ENCODE measurements at regions of chr6 and their contacts with region 1.

Region 1: GRCh38 chr6:11064836-11065235 is 20.7 kb upstream of the ELOVL2 start:
- DNase-seq: no peak
- ATAC-seq: no peak
- H3K4me3 ChIP-seq: no peak overlapping the region
- H3K4me3 Mint-ChIP-seq: no peak overlapping the region
- H3K27ac ChIP-seq: no peak overlapping the region
- H3K27ac Mint-ChIP-seq: no peak overlapping the region
- H3K4me1 ChIP-seq: no peaks in the 10 kb centered on the region
- H3K4me1 Mint-ChIP-seq: no peaks in the 10 kb centered on the region
- H3K27me3 ChIP-seq: no peaks in the 10 kb centered on the region
- H3K27me3 Mint-ChIP-seq: peaks cover 0 to 19% (median 7%) of the 10 kb centered on the region in 5 donors

Region 2: GRCh38 chr6:10478187-10479040 is 586.4 kb before region 1 on chr6:
- CTCF ChIA-PET with region 1: interaction called, 5 read pairs
- POLR2A ChIA-PET with region 1: no interaction called
- intact Hi-C with region 1: loop called in 1 of 2 experiments (anchors 1 kb)
- DNase-seq: peak in 3 of 9 donors; percentile 4 to 31 (median 15)
- ATAC-seq: no peak
- H3K4me3 ChIP-seq: no peak overlapping the region
- H3K4me3 Mint-ChIP-seq: no peak overlapping the region
- H3K27ac ChIP-seq: no peak overlapping the region
- H3K27ac Mint-ChIP-seq: no peak overlapping the region
- H3K4me1 ChIP-seq: no peaks in the 10 kb centered on the region
- H3K4me1 Mint-ChIP-seq: peaks cover 0 to 3% (median 0%) of the 10 kb centered on the region in 7 donors
- H3K27me3 ChIP-seq: no peaks in the 10 kb centered on the region
- H3K27me3 Mint-ChIP-seq: peaks cover 0 to 36% (median 22%) of the 10 kb centered on the region in 5 donors

Region 3: DNA sequence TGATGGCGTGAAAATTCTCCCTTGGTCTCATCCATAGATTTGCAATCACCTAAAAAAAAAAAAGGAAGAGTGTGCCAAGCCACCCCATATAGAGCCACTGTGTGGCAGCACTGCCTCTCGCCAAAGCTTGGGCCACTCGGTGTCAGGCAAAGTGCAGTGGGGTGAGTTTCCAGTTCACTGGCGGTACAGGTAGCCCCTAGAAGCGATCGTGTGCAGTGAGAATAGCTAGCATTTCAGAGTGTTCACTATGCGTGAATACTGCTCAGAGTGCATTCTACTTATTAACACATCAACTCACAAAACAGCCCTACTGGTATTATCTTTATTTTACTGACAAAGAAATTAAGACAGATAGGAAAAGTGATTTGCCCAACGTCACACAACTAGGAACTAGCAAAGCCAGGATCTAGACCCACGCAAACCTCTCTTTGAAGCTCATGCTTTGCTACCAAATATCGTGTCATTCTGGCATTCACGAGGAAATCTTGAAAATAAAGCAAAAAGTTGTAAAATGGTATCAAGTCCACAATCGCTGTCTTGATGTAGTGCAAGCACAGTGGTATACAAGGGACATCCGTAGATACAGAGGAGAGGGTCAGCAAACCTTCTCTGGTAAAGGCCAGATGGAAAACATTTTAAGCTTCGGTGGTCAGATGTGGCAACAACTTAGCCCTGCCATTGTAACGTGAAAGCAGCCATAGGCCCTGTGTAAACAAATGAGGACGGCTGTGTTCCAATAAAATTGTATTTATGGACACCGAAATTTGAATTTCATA is 554.1 kb before region 1 on chr6:
- CTCF ChIA-PET with region 1: no interaction called
- POLR2A ChIA-PET with region 1: no interaction called
- intact Hi-C with region 1: loop called in 1 of 2 experiments (anchors 1 kb)
- DNase-seq: peak in 8 of 9 donors; percentile 9 to 53 (median 39)
- ATAC-seq: peak; percentile 94
- H3K4me3 ChIP-seq: no peak overlapping the region
- H3K4me3 Mint-ChIP-seq: peak overlapping the region in 5 of 10 donors; percentile 8 to 40 (median 12)
- H3K27ac ChIP-seq: no peak overlapping the region
- H3K27ac Mint-ChIP-seq: peak overlapping the region in 1 of 9 donors; percentile 28
- H3K4me1 ChIP-seq: no peaks in the 10 kb centered on the region
- H3K4me1 Mint-ChIP-seq: peaks cover 0 to 7% (median 5%) of the 10 kb centered on the region in 7 donors
- H3K27me3 ChIP-seq: no peaks in the 10 kb centered on the region
- H3K27me3 Mint-ChIP-seq: peaks cover 0 to 11% (median 7%) of the 10 kb centered on the region in 5 donors

Region 4: DNA sequence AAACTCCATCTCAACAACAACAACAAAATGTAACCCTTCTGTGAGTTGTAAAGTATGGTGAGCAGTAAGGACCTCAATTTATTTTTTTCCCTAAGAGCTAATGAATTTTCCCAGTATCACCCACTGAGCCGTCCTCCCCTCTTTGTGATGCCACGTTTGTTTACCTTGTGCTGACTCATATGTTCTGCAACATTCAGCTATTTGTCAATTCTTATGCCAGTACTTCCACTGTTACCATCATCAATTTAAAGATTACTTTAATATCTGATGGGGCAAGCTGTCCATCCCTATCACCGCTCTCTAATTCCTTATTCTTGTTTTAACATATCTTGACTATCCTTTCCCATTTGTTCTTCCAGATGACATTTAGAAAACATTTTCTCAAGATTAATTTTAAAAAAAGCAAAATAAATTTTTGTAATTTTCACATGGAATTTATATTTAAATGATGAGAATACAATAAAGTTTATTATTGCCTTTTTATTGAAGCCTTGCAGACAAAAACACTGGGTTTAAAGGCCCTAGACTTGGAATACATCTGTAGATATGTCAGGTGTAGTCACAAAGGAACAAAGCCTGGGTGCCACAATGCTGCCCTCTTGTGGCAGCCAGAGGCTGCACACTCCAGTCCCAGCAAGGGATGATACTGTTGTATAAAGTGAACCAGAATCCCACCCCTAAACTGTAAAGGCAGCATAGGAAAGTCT is 263.9 kb before region 1 on chr6:
- CTCF ChIA-PET with region 1: no interaction called
- POLR2A ChIA-PET with region 1: no interaction called
- intact Hi-C with region 1: loop called in 1 of 2 experiments (anchors 5 kb)
- DNase-seq: peak; percentile 21 to 68 (median 56)
- ATAC-seq: peak; percentile 91
- H3K4me3 ChIP-seq: no peak overlapping the region
- H3K4me3 Mint-ChIP-seq: no peak overlapping the region
- H3K27ac ChIP-seq: no peak overlapping the region
- H3K27ac Mint-ChIP-seq: no peak overlapping the region
- H3K4me1 ChIP-seq: no peaks in the 10 kb centered on the region
- H3K4me1 Mint-ChIP-seq: peaks cover 0 to 2% (median 0%) of the 10 kb centered on the region in 7 donors
- H3K27me3 ChIP-seq: no peaks in the 10 kb centered on the region
- H3K27me3 Mint-ChIP-seq: no peaks in the 10 kb centered on the region

Region 5: GRCh38 chr6:10847684-10848083 is 217.2 kb before region 1 on chr6:
- CTCF ChIA-PET with region 1: no interaction called
- POLR2A ChIA-PET with region 1: no interaction called
- intact Hi-C with region 1: loop called in 1 of 2 experiments (anchors 5 kb)
- DNase-seq: no peak
- ATAC-seq: no peak
- H3K4me3 ChIP-seq: no peak overlapping the region
- H3K4me3 Mint-ChIP-seq: no peak overlapping the region
- H3K27ac ChIP-seq: no peak overlapping the region
- H3K27ac Mint-ChIP-seq: no peak overlapping the region
- H3K4me1 ChIP-seq: no peaks in the 10 kb centered on the region
- H3K4me1 Mint-ChIP-seq: no peaks in the 10 kb centered on the region
- H3K27me3 ChIP-seq: no peaks in the 10 kb centered on the region
- H3K27me3 Mint-ChIP-seq: peaks cover 6 to 32% (median 13%) of the 10 kb centered on the region in 5 donors

Region 6: GRCh38 chr6:10873313-10873712 is 191.5 kb before region 1 on chr6:
- CTCF ChIA-PET with region 1: no interaction called
- POLR2A ChIA-PET with region 1: no interaction called
- intact Hi-C with region 1: no loop called
- DNase-seq: no peak
- ATAC-seq: no peak
- H3K4me3 ChIP-seq: no peak overlapping the region
- H3K4me3 Mint-ChIP-seq: no peak overlapping the region
- H3K27ac ChIP-seq: no peak overlapping the region
- H3K27ac Mint-ChIP-seq: no peak overlapping the region
- H3K4me1 ChIP-seq: no peaks in the 10 kb centered on the region
- H3K4me1 Mint-ChIP-seq: no peaks in the 10 kb centered on the region
- H3K27me3 ChIP-seq: no peaks in the 10 kb centered on the region
- H3K27me3 Mint-ChIP-seq: peaks cover 0 to 27% (median 11%) of the 10 kb centered on the region in 5 donors

Region 7: GRCh38 chr6:10954590-10955010 is 110.2 kb before region 1 on chr6:
- CTCF ChIA-PET with region 1: no interaction called
- POLR2A ChIA-PET with region 1: no interaction called
- intact Hi-C with region 1: loop called in 1 of 2 experiments (anchors 1 kb)
- DNase-seq: peak; percentile 2 to 71 (median 32)
- ATAC-seq: peak; percentile 69
- H3K4me3 ChIP-seq: no peak overlapping the region
- H3K4me3 Mint-ChIP-seq: no peak overlapping the region
- H3K27ac ChIP-seq: no peak overlapping the region
- H3K27ac Mint-ChIP-seq: peak overlapping the region in 1 of 9 donors; percentile 20
- H3K4me1 ChIP-seq: no peaks in the 10 kb centered on the region
- H3K4me1 Mint-ChIP-seq: no peaks in the 10 kb centered on the region
- H3K27me3 ChIP-seq: no peaks in the 10 kb centered on the region
- H3K27me3 Mint-ChIP-seq: peaks cover 13 to 31% (median 26%) of the 10 kb centered on the region in 5 donors

Measured in naive thymus-derived CD4-positive, alpha-beta T cell (primary cell).